MCF 10A (cell line): ENCODE measurements at regions of chr5 and their contacts with region 1.

Region 1: DNA sequence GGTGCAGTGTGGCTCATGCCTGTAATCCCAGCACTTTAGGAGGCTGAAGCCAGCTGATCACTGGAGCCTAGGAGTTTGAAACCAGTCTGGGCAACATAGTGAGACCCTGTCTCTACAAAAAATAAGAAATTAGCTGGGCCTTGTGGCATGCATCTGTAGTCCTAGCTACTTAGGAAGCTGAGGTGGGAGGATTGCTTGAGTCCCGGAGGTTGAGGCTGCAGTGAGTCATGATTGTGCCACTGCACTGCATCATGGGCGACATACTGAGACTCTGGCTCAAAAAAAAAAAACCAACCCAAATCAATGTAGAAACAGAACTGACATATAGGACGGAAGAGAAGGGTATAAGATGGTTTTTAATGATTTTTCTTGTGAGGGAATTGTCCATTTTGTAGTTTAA is 27.7 kb downstream of the G3BP1 start:
- DNase-seq: peak; percentile 63
- H3K4me3 Mint-ChIP-seq: no peak overlapping the region
- H3K27ac Mint-ChIP-seq: peak overlapping the region; percentile 28
- H3K4me1 Mint-ChIP-seq: peaks cover 16% of the 10 kb centered on the region
- H3K27me3 Mint-ChIP-seq: no peaks in the 10 kb centered on the region
- CTCF ChIP-seq: no peak

Region 2: DNA sequence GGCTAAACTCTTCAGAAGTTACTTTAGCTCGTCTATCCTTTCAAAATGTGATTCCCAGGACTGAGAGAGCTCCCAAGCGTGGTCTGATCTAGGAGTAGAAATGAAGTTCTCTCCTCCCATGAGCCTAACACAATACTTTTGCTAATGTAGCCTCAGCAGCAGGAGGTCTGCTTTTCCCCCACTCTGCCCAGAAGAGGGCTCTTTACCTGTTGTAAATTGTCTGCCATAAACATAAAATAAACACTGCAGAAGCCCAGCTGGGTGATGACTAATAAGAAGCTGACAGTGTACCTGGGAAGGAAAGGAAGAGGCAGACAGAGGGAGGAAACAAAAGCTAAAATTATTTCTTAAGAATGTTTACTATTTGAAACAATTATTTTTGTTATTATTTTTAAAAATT is 511.2 kb before region 1 on chr5:
- CTCF ChIA-PET with region 1: no interaction called
- POLR2A ChIA-PET with region 1: no interaction called
- intact Hi-C with region 1: no loop called
- DNase-seq: peak; percentile 69
- H3K4me3 Mint-ChIP-seq: no peak overlapping the region
- H3K27ac Mint-ChIP-seq: no peak overlapping the region
- H3K4me1 Mint-ChIP-seq: peaks cover 6% of the 10 kb centered on the region
- H3K27me3 Mint-ChIP-seq: no peaks in the 10 kb centered on the region
- CTCF ChIP-seq: peak; percentile 5

Region 3: DNA sequence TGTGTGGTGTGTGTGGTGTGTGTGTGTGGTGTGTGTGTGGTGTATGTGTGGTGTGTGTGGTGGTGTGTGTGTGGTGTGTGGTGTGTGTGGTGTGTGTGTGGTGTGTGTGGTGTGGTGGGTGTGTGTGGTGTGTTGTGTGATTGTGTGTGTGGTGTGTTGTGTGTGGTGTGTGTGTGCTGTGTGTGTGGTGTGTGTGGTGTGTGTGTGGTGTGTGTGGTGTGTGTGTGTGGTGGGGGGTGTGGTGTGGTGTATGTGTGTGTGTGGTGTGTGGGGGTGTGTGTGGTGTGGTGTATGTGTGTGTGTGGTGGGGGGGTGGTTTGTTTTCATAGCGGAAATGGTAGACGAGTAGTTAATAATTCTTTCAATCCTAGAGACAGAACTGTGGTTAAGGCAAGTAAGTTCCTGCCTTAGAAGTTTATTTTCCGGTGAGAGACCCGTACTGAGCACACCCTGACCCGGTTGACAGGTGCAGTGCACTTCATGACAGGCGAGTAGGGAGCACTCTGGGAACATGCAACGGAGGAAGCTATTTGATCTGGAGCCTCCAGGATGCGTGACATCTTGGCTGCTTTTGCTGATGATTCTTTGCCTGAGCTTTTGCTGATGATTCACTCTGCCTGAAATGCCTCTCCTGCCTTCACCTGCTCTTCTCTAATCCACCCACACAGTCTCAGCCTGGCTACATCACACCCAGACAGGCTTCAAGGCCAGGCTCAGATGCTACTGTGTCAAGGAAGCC is 186.5 kb before region 1 on chr5:
- CTCF ChIA-PET with region 1: no interaction called
- POLR2A ChIA-PET with region 1: no interaction called
- intact Hi-C with region 1: no loop called
- DNase-seq: peak; percentile 93
- H3K4me3 Mint-ChIP-seq: no peak overlapping the region
- H3K27ac Mint-ChIP-seq: peak overlapping the region; percentile 30
- H3K4me1 Mint-ChIP-seq: peaks cover 56% of the 10 kb centered on the region
- H3K27me3 Mint-ChIP-seq: no peaks in the 10 kb centered on the region
- CTCF ChIP-seq: no peak

Region 4: DNA sequence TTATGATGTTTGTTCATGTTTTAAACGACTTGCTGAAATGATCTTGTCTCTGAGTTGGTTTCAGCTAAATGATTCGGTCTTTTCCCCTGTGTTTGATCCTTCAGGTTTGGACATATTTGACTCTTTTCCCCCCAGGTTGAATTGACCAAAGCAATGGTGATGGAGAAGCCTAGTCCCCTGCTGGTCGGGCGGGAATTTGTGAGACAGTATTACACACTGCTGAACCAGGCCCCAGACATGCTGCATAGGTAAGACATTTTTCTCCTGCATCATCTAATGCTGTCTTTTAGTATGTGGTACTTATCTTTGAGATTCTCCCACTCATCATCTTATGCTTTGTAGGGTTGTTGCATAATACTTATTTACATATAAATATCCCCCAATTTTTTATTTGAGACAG is 12.9 kb before region 1 on chr5:
- CTCF ChIA-PET with region 1: interaction called, 9 read pairs
- POLR2A ChIA-PET with region 1: interaction called, 10 read pairs
- intact Hi-C with region 1: no loop called
- DNase-seq: no peak
- H3K4me3 Mint-ChIP-seq: no peak overlapping the region
- H3K27ac Mint-ChIP-seq: no peak overlapping the region
- H3K4me1 Mint-ChIP-seq: peaks cover 26% of the 10 kb centered on the region
- H3K27me3 Mint-ChIP-seq: no peaks in the 10 kb centered on the region
- CTCF ChIP-seq: no peak

Region 5: DNA sequence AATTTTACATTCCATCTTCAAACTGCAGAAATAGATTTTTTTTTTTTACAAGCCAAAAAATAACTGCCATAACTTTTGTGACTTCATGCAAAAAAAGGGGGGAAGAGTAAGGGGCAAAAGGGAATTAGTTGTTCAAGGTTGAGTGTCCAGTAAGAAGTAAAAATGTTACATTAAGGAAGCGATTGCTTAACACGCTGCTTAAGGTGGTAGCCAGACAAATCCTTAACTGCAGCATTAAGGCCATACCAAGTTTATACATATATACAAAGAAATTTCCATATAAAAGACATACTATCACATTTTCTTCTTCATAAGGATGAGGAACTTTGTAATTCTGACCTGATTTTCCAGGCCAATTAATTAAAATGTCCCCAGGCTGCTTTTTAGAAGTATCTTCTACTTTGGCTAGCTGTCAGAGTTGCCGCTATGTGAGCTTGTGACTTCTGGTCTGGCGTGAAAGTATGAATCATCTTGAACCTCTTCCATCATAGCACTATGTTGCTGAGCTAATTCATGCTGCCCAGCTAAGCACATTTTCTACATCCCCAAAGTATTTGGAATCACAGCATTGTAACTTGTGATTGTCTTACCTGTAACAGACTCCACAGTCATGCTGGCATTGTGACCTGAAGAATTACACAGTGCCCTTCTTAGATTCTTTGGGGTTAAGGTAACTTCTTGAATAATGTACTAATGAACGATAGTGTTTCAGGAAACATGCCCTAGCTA is 12.3 kb after region 1 on chr5:
- CTCF ChIA-PET with region 1: interaction called, 6 read pairs
- POLR2A ChIA-PET with region 1: interaction called, 21 read pairs
- intact Hi-C with region 1: no loop called
- DNase-seq: peak; percentile 57
- H3K4me3 Mint-ChIP-seq: no peak overlapping the region
- H3K27ac Mint-ChIP-seq: peak overlapping the region; percentile 58
- H3K4me1 Mint-ChIP-seq: peaks cover 44% of the 10 kb centered on the region
- H3K27me3 Mint-ChIP-seq: no peaks in the 10 kb centered on the region
- CTCF ChIP-seq: no peak